Endothelial cell of umbilical vein (primary cell): ENCODE measurements at regions of chr15 and their contacts with region 1.

Region 1: GRCh38 chr15:78195735-78196201 is 38.6 kb downstream of the ACSBG1 start:
- DNase-seq: peak; percentile 32
- H3K4me3 ChIP-seq: no peak overlapping the region
- H3K27ac ChIP-seq: no peak overlapping the region
- H3K4me1 ChIP-seq: no peaks in the 10 kb centered on the region
- H3K27me3 ChIP-seq: peaks cover 0 to 2% of the 10 kb centered on the region in 2 experiments
- CTCF ChIP-seq: peak; percentile 64 to 75
- POLR2A ChIP-seq: no peak

Region 2: GRCh38 chr15:77786181-77786890 is 409.4 kb before region 1 on chr15:
- CTCF ChIA-PET with region 1: no interaction called
- POLR2A ChIA-PET with region 1: no interaction called
- dilution Hi-C with region 1: no loop called
- intact Hi-C with region 1: no loop called
- DNase-seq: no peak
- H3K4me3 ChIP-seq: no peak overlapping the region
- H3K27ac ChIP-seq: no peak overlapping the region
- H3K4me1 ChIP-seq: no peaks in the 10 kb centered on the region
- H3K27me3 ChIP-seq: no peaks in the 10 kb centered on the region
- CTCF ChIP-seq: no peak
- POLR2A ChIP-seq: no peak

Region 3: GRCh38 chr15:77959432-77959879 is 236.3 kb before region 1 on chr15:
- CTCF ChIA-PET with region 1: interaction called, 19 read pairs
- POLR2A ChIA-PET with region 1: no interaction called
- dilution Hi-C with region 1: no loop called
- intact Hi-C with region 1: loop called (anchors 1 kb)
- DNase-seq: peak; percentile 76
- H3K4me3 ChIP-seq: peak overlapping the region in 1 of 3 experiments; percentile 32
- H3K27ac ChIP-seq: no peak overlapping the region
- H3K4me1 ChIP-seq: no peaks in the 10 kb centered on the region
- H3K27me3 ChIP-seq: peaks cover 3 to 8% of the 10 kb centered on the region in 2 experiments
- CTCF ChIP-seq: peak; percentile 84 to 93
- POLR2A ChIP-seq: no peak

Region 4: GRCh38 chr15:78120523-78120922 is 75.2 kb before region 1 on chr15:
- CTCF ChIA-PET with region 1: interaction called, 195 read pairs
- POLR2A ChIA-PET with region 1: no interaction called
- dilution Hi-C with region 1: no loop called
- intact Hi-C with region 1: no loop called
- DNase-seq: no peak
- H3K4me3 ChIP-seq: no peak overlapping the region
- H3K27ac ChIP-seq: no peak overlapping the region
- H3K4me1 ChIP-seq: no peaks in the 10 kb centered on the region
- H3K27me3 ChIP-seq: no peaks in the 10 kb centered on the region
- CTCF ChIP-seq: no peak
- POLR2A ChIP-seq: no peak

Region 5: DNA sequence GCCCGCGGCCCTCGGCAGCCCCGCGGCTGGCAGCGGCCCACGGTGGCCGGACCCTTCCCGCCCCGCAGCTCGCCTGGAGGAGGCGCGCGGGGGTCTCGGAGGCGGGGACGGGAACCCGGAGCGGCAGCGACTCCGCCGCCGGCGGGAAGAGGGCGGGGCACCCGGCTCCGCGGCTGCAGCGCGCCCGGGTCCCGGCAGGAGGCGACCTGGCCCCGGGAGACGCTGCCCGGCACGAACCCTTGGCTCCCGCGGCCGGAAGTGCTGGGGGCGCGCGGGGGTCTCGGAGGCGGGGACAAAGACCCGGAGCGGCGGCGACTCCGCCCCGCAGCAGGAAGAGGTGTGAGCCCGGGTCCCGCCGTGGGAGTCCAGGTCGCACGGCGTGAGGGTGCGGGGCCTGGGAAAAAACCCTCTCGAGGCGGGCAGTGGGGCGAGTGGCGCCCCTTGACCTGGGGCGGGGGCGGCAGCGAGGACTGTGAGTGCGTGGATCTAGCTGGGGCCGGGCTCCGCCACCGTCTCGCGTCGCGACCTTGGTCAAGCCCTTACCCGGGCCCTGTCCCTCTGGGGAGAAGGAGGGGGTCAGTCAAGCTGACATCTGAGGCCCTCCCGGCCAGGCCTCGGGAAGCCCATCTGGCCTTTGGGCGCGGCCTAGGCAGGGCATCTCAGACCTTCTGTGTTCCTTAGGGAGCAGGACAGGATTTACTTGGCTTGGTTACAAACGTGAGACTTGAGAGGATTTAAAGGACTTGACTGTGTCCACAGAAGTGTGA is 64.3 kb before region 1 on chr15 and contains the start of gene CIB2:
- CTCF ChIA-PET with region 1: interaction called, 35 read pairs
- POLR2A ChIA-PET with region 1: no interaction called
- dilution Hi-C with region 1: no loop called
- intact Hi-C with region 1: loop called (anchors 5 kb)
- DNase-seq: peak; percentile 64
- H3K4me3 ChIP-seq: peak within 1 kb of the TSS; percentile 43 to 71 (median 68)
- H3K27ac ChIP-seq: no peak within 1 kb of the TSS
- H3K4me1 ChIP-seq: peaks cover 7% of the 10 kb centered on the region
- H3K27me3 ChIP-seq: no peaks in the 10 kb centered on the region
- CTCF ChIP-seq: peak; percentile 58 to 61
- POLR2A ChIP-seq: no peak
- total RNA-seq, gene CIB2: 2.5 and 4.0 TPM in 2 replicates

Region 6: GRCh38 chr15:78177447-78177873 is 18.3 kb before region 1 on chr15:
- CTCF ChIA-PET with region 1: interaction called, 12 read pairs
- POLR2A ChIA-PET with region 1: no interaction called
- dilution Hi-C with region 1: no loop called
- intact Hi-C with region 1: no loop called
- DNase-seq: peak; percentile 26
- H3K4me3 ChIP-seq: no peak overlapping the region
- H3K27ac ChIP-seq: no peak overlapping the region
- H3K4me1 ChIP-seq: no peaks in the 10 kb centered on the region
- H3K27me3 ChIP-seq: no peaks in the 10 kb centered on the region
- CTCF ChIP-seq: peak; percentile 53 to 70
- POLR2A ChIP-seq: no peak

Region 7: GRCh38 chr15:78182821-78183220 is 12.9 kb before region 1 on chr15:
- CTCF ChIA-PET with region 1: interaction called, 12 read pairs
- POLR2A ChIA-PET with region 1: no interaction called
- dilution Hi-C with region 1: no loop called
- intact Hi-C with region 1: no loop called
- DNase-seq: no peak
- H3K4me3 ChIP-seq: no peak overlapping the region
- H3K27ac ChIP-seq: no peak overlapping the region
- H3K4me1 ChIP-seq: no peaks in the 10 kb centered on the region
- H3K27me3 ChIP-seq: peaks cover 0 to 2% of the 10 kb centered on the region in 2 experiments
- CTCF ChIP-seq: no peak
- POLR2A ChIP-seq: no peak

Region 8: DNA sequence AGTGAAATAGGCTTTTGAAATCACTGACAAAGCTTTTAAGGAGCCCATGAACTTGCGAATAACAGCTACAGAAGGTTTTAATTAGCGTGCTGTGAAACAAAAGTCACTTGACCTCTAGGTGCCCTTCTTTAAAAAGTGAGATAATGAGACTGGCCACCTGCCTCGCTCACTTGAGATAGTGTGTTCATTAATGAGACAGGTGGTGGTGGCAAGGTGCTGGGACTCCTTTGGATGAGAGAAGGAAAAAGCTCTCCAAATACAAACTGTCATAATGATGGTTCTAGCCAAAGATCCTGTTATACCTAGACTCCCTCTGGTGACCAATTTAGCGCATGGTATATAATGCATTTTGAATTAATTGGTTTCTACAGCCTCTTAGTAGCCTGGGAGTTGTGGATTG is 219.5 kb after region 1 on chr15:
- CTCF ChIA-PET with region 1: no interaction called
- POLR2A ChIA-PET with region 1: no interaction called
- dilution Hi-C with region 1: no loop called
- intact Hi-C with region 1: no loop called
- DNase-seq: peak; percentile 14
- H3K4me3 ChIP-seq: no peak overlapping the region
- H3K27ac ChIP-seq: no peak overlapping the region
- H3K4me1 ChIP-seq: peaks cover 12% of the 10 kb centered on the region
- H3K27me3 ChIP-seq: peaks cover 3 to 9% of the 10 kb centered on the region in 2 experiments
- CTCF ChIP-seq: no peak
- POLR2A ChIP-seq: no peak

Region 9: GRCh38 chr15:79494963-79495746 is 1299.4 kb after region 1 on chr15:
- CTCF ChIA-PET with region 1: no interaction called
- POLR2A ChIA-PET with region 1: no interaction called
- dilution Hi-C with region 1: no loop called
- intact Hi-C with region 1: no loop called
- DNase-seq: no peak
- H3K4me3 ChIP-seq: no peak overlapping the region
- H3K27ac ChIP-seq: no peak overlapping the region
- H3K4me1 ChIP-seq: no peaks in the 10 kb centered on the region
- H3K27me3 ChIP-seq: no peaks in the 10 kb centered on the region
- CTCF ChIP-seq: no peak
- POLR2A ChIP-seq: no peak